ENCODE measurements at regions of chr10 and their contacts with region 1.

Region 1: GRCh38 chr10:97210543-97210961 is 24.8 kb upstream of the SLIT1 start:
- DNase-seq: peak; percentile 65 to 85
- ATAC-seq: peak; percentile 79
- H3K4me3 ChIP-seq: no peak overlapping the region
- H3K27ac ChIP-seq: no peak overlapping the region
- H3K4me1 ChIP-seq: no peaks in the 10 kb centered on the region
- H3K27me3 ChIP-seq: no peaks in the 10 kb centered on the region

Region 2: GRCh38 chr10:96374985-96375830 is 835.3 kb before region 1 on chr10:
- intact Hi-C with region 1: loop called in 1 of 2 experiments (anchors 10 kb)
- DNase-seq: peak; percentile 87 to 93
- ATAC-seq: peak; percentile 93
- H3K4me3 ChIP-seq: no peak overlapping the region
- H3K27ac ChIP-seq: no peak overlapping the region
- H3K4me1 ChIP-seq: no peaks in the 10 kb centered on the region
- H3K27me3 ChIP-seq: no peaks in the 10 kb centered on the region

Region 3: GRCh38 chr10:97072851-97073665 is 137.5 kb before region 1 on chr10:
- intact Hi-C with region 1: loop called (anchors 2 to 5 kb)
- DNase-seq: peak; percentile 86 to 93
- ATAC-seq: peak; percentile 77
- H3K4me3 ChIP-seq: no peak overlapping the region
- H3K27ac ChIP-seq: no peak overlapping the region
- H3K4me1 ChIP-seq: no peaks in the 10 kb centered on the region
- H3K27me3 ChIP-seq: no peaks in the 10 kb centered on the region

Measured in aorta (tissue), 5 donors.